ENCODE measurements at regions of chr1 and their contacts with region 1.

Region 1: GRCh38 chr1:46489638-46490405 is at the start of gene DMBX1:
- DNase-seq: peak; percentile 84
- H3K4me3 Mint-ChIP-seq: peak within 1 kb of the TSS; percentile 76
- H3K27ac Mint-ChIP-seq: peak within 1 kb of the TSS; percentile 60
- H3K4me1 Mint-ChIP-seq: peaks cover 22% of the 10 kb centered on the region
- H3K27me3 Mint-ChIP-seq: peaks cover 90% of the 10 kb centered on the region
- total RNA-seq, gene DMBX1: 0.07 TPM in 1 of 2 replicates, not detected in the other

Region 2: GRCh38 chr1:46442317-46443161 is 47.3 kb before region 1 on chr1:
- intact Hi-C with region 1: loop called (anchors 2 kb)
- DNase-seq: peak; percentile 92
- H3K4me3 Mint-ChIP-seq: peak overlapping the region; percentile 85
- H3K27ac Mint-ChIP-seq: peak overlapping the region; percentile 1
- H3K4me1 Mint-ChIP-seq: peaks cover 13% of the 10 kb centered on the region
- H3K27me3 Mint-ChIP-seq: peaks cover 36% of the 10 kb centered on the region

Measured in activated CD4-positive, alpha-beta T cell treated with anti-CD3 and anti-CD28 coated beads, Interleukin-2, amount 10 ng/mL, durations not matched to agents 24 days and 14 days (primary cell).